AG04449 (cell line): ENCODE measurements at regions of chr12 and their contacts with region 1.

Region 1: GRCh38 chr12:49750027-49750995 is 9.0 kb downstream of the TMBIM6 start:
- DNase-seq: no peak
- H3K4me3 ChIP-seq: no peak overlapping the region
- CTCF ChIP-seq: no peak

Region 2: GRCh38 chr12:49716553-49716952 is 33.8 kb before region 1 on chr12:
- CTCF ChIA-PET with region 1: no interaction called
- POLR2A ChIA-PET with region 1: no interaction called
- DNase-seq: no peak
- H3K4me3 ChIP-seq: no peak overlapping the region
- CTCF ChIP-seq: no peak

Region 3: GRCh38 chr12:49763006-49763591 is 12.8 kb after region 1 on chr12:
- CTCF ChIA-PET with region 1: interaction called, 48 read pairs
- POLR2A ChIA-PET with region 1: no interaction called
- DNase-seq: no peak
- H3K4me3 ChIP-seq: no peak overlapping the region
- CTCF ChIP-seq: peak; percentile 82